ENCODE measurements at regions of chr1 and their contacts with region 1.

Region 1: GRCh38 chr1:110209715-110210603 is at the start of gene KCNC4:
- DNase-seq: peak; percentile 93
- H3K4me3 Mint-ChIP-seq: peak within 1 kb of the TSS; percentile 84
- H3K27ac Mint-ChIP-seq: peak within 1 kb of the TSS; percentile 96
- H3K4me1 Mint-ChIP-seq: peaks cover 46% of the 10 kb centered on the region
- H3K27me3 Mint-ChIP-seq: peaks cover 11% of the 10 kb centered on the region
- total RNA-seq, gene KCNC4: 7.1 to 8.2 TPM

Region 2: GRCh38 chr1:110170766-110171733 is 38.9 kb before region 1 on chr1:
- CTCF ChIA-PET with region 1: no interaction called
- POLR2A ChIA-PET with region 1: no interaction called
- DNase-seq: no peak
- H3K4me3 Mint-ChIP-seq: no peak overlapping the region
- H3K27ac Mint-ChIP-seq: no peak overlapping the region
- H3K4me1 Mint-ChIP-seq: no peaks in the 10 kb centered on the region
- H3K27me3 Mint-ChIP-seq: no peaks in the 10 kb centered on the region

Region 3: GRCh38 chr1:110224240-110224995 is 14.5 kb after region 1 on chr1:
- CTCF ChIA-PET with region 1: interaction called, 19 read pairs
- POLR2A ChIA-PET with region 1: no interaction called
- DNase-seq: no peak
- H3K4me3 Mint-ChIP-seq: no peak overlapping the region
- H3K27ac Mint-ChIP-seq: no peak overlapping the region
- H3K4me1 Mint-ChIP-seq: no peaks in the 10 kb centered on the region
- H3K27me3 Mint-ChIP-seq: no peaks in the 10 kb centered on the region

Region 4: DNA sequence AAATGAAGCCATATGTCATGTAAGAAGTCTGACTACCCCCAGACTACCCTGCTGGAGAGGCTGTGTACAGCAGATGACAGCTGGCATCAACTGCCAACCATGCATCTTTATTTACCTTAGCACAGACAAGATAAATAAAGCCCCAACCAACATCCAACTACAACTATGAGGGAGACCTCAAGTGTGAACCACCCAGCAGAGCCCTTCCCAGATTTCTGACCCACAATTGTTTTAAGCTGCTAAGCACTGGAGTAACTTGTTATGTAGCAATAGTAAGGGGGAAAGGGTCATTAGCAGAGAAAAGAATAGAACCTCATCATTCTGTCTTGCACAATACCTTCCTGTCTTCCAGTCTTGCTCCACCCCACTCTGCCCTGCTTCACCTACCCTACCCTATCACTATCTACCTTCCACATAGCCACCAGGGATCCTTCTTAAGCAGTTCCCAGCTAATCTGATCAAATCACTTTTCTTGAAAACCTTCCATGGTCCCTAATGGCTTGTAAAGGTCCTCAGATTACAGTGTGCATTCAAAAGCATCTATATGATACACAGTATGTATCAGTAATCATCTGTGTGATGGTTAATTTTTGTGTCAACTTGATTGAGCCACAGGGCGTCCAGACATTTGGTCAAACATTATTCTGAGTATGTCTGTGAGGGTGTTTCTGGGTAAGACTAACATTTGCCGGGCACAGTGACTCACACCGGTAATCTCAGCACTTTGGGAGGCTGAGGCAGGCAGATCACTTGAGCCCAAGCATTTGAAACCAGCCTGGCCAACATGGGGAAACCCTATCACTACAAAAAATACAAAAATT is 109.6 kb after region 1 on chr1:
- CTCF ChIA-PET with region 1: interaction called, 73 read pairs
- POLR2A ChIA-PET with region 1: no interaction called
- DNase-seq: no peak
- H3K4me3 Mint-ChIP-seq: no peak overlapping the region
- H3K27ac Mint-ChIP-seq: no peak overlapping the region
- H3K4me1 Mint-ChIP-seq: no peaks in the 10 kb centered on the region
- H3K27me3 Mint-ChIP-seq: no peaks in the 10 kb centered on the region

Region 5: DNA sequence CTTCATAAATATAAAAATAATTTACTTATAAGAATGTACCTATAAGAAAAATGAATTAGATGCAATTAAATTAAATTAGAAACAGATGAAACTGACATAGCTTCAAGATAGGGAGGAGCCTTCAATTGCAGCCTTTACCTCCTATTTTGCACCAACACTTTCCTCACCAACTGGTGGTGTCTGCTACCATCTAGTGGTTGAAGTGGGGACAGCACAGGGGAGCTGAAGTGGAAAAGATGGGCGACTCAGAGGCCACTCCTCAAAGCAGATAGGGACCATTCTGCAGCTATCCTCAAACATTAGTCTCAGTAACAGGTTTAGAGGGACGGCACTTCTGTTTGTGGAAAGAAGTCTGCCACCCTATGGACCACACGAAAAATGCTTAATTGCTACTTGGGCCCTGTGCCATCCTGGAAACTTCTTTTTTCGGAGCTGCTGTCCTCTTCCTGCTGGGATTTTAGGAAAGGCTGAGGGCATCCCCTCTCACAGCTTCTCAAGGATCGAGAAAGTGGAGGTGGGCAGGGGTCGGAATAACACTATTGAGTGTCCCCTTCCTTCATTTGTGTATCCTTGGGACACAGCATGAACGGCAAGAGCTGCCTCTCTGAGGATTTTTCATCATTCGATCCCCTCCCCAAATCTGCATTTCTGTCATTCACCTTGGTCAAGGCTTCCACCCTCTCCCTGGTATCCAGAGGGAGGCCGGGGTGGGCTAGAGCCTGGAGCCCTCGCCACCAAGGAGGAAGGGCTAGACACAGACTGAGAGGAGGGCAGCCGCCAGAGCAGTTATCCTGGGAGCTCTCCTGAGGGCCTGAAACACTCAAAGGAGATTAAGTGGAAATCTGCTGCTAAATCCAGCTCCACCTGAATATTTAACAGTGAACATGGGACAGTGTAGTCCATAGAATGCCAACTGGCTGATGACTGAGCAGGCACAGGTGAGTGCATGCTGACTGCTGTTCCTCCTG is 250.6 kb after region 1 on chr1:
- CTCF ChIA-PET with region 1: interaction called, 36 read pairs
- POLR2A ChIA-PET with region 1: no interaction called
- DNase-seq: peak; percentile 88
- H3K4me3 Mint-ChIP-seq: no peak overlapping the region
- H3K27ac Mint-ChIP-seq: no peak overlapping the region
- H3K4me1 Mint-ChIP-seq: no peaks in the 10 kb centered on the region
- H3K27me3 Mint-ChIP-seq: no peaks in the 10 kb centered on the region

Measured in activated CD4-positive, alpha-beta T cell treated with anti-CD3 and anti-CD28 coated beads, Interleukin-2, amount 10 ng/mL, durations not matched to agents 7 days and 5 days (primary cell).